Activated CD4-positive, alpha-beta memory T cell treated with anti-CD3 and anti-CD28 coated beads for 36 hours (primary cell): ENCODE measurements at regions of chr11 and their contacts with region 1.

Region 1: GRCh38 chr11:67656278-67656922 is 5.9 kb upstream of the ACY3 start:
- DNase-seq: no peak
- H3K4me3 Mint-ChIP-seq: no peak overlapping the region
- H3K27ac Mint-ChIP-seq: no peak overlapping the region
- H3K4me1 Mint-ChIP-seq: peaks cover 14% of the 10 kb centered on the region
- H3K27me3 Mint-ChIP-seq: no peaks in the 10 kb centered on the region

Region 2: DNA sequence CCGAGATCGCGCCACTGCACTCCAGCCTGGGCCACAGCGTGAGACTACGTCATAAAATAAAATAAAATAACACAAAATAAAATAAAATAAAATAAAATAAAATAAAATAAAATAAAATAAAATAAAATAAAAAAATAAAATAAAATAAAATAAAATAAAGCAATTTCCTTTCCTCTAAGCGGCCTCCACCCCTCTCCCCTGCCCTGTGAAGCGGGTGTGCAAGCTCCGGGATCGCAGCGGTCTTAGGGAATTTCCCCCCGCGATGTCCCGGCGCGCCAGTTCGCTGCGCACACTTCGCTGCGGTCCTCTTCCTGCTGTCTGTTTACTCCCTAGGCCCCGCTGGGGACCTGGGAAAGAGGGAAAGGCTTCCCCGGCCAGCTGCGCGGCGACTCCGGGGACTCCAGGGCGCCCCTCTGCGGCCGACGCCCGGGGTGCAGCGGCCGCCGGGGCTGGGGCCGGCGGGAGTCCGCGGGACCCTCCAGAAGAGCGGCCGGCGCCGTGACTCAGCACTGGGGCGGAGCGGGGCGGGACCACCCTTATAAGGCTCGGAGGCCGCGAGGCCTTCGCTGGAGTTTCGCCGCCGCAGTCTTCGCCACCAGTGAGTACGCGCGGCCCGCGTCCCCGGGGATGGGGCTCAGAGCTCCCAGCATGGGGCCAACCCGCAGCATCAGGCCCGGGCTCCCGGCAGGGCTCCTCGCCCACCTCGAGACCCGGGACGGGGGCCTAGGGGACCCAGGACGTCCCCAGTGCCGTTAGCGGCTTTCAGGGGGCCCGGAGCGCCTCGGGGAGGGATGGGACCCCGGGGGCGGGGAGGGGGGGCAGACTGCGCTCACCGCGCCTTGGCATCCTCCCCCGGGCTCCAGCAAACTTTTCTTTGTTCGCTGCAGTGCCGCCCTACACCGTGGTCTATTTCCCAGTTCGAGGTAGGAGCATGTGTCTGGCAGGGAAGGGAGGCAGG is 72.9 kb before region 1 on chr11 and contains the start of gene GSTP1:
- CTCF ChIA-PET with region 1: interaction called, 4 read pairs
- POLR2A ChIA-PET with region 1: no interaction called
- intact Hi-C with region 1: loop called (anchors 5 kb)
- DNase-seq: peak; percentile 85
- H3K4me3 Mint-ChIP-seq: peak within 1 kb of the TSS; percentile 95
- H3K27ac Mint-ChIP-seq: peak within 1 kb of the TSS; percentile 91
- H3K4me1 Mint-ChIP-seq: peaks cover 52% of the 10 kb centered on the region
- H3K27me3 Mint-ChIP-seq: peaks cover under 1% of the 10 kb centered on the region
- total RNA-seq, gene GSTP1: 361 to 362 TPM

Region 3: GRCh38 chr11:67613960-67614715 is 42.3 kb before region 1 on chr11:
- CTCF ChIA-PET with region 1: interaction called, 24 read pairs
- POLR2A ChIA-PET with region 1: no interaction called
- intact Hi-C with region 1: no loop called
- DNase-seq: peak; percentile 92
- H3K4me3 Mint-ChIP-seq: peak overlapping the region; percentile 79
- H3K27ac Mint-ChIP-seq: peak overlapping the region; percentile 98
- H3K4me1 Mint-ChIP-seq: peaks cover 26% of the 10 kb centered on the region
- H3K27me3 Mint-ChIP-seq: no peaks in the 10 kb centered on the region

Region 4: GRCh38 chr11:67640021-67640757 is 16.2 kb before region 1 on chr11:
- CTCF ChIA-PET with region 1: interaction called, 34 read pairs
- POLR2A ChIA-PET with region 1: no interaction called
- intact Hi-C with region 1: loop called (anchors 1 kb)
- DNase-seq: peak; percentile 73
- H3K4me3 Mint-ChIP-seq: no peak overlapping the region
- H3K27ac Mint-ChIP-seq: no peak overlapping the region
- H3K4me1 Mint-ChIP-seq: peaks cover 3% of the 10 kb centered on the region
- H3K27me3 Mint-ChIP-seq: no peaks in the 10 kb centered on the region